Psoas muscle (tissue), 8 donors: ENCODE measurements at regions of chrX and their contacts with region 1.

Region 1: GRCh38 chrX:40735325-40736169 is at the start of gene MED14:
- DNase-seq: peak; percentile 91 to 95
- ATAC-seq: peak; percentile 96 to 97 (median 97)
- H3K4me3 ChIP-seq: peak within 1 kb of the TSS; percentile 91
- H3K27ac ChIP-seq: peak within 1 kb of the TSS; percentile 99
- H3K4me1 ChIP-seq: peaks cover 5% of the 10 kb centered on the region
- H3K27me3 ChIP-seq: peaks cover 0 to 6% (median 0%) of the 10 kb centered on the region in 3 donors
- CTCF ChIP-seq: peak; percentile 52
- total RNA-seq, gene MED14: 46.6 to 63.2 (median 55.9) TPM

Region 2: DNA sequence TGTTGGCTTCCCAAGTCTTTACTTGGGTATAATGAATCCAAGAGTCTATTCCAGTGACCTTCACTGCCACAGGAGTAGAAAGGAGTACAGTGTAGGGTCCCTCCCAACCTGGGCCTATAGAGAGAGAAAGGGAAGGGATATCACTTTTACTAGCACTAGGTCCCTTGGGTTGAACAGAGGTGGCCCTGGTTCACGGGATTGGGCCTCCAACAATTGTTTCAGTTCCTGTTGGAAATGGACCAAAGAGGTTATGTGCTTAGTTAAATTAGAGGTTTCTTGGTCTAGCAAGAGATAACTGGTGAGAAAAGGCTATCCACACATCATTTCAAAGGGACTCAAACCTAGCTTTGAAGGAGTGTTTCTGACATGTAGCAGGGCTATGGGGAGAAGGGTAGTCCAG is 56.9 kb after region 1 on chrX:
- intact Hi-C with region 1: loop called in 1 of 2 experiments (anchors 5 kb)
- DNase-seq: no peak
- ATAC-seq: no peak
- H3K4me3 ChIP-seq: no peak overlapping the region
- H3K27ac ChIP-seq: no peak overlapping the region
- H3K4me1 ChIP-seq: peaks cover 4% of the 10 kb centered on the region
- H3K27me3 ChIP-seq: peaks cover 0 to 9% (median 0%) of the 10 kb centered on the region in 3 donors
- CTCF ChIP-seq: no peak